Natural killer cell (primary cell): ENCODE measurements at regions of chr11 and their contacts with region 1.

Region 1: GRCh38 chr11:122505304-122506006 is 150.1 kb upstream of the UBASH3B start:
- DNase-seq: peak; percentile 17 to 58
- ATAC-seq: peak in 2 of 3 donors; percentile 56 to 74
- H3K4me3 ChIP-seq: no peak overlapping the region
- H3K4me3 Mint-ChIP-seq: no peak overlapping the region
- H3K27ac ChIP-seq: no peak overlapping the region
- H3K27ac Mint-ChIP-seq: no peak overlapping the region
- H3K4me1 ChIP-seq: no peaks in the 10 kb centered on the region
- H3K4me1 Mint-ChIP-seq: no peaks in the 10 kb centered on the region
- H3K27me3 ChIP-seq: no peaks in the 10 kb centered on the region
- H3K27me3 Mint-ChIP-seq: peaks cover 17 to 22% of the 10 kb centered on the region in 2 donors
- CTCF ChIP-seq: peak; percentile 47

Region 2: DNA sequence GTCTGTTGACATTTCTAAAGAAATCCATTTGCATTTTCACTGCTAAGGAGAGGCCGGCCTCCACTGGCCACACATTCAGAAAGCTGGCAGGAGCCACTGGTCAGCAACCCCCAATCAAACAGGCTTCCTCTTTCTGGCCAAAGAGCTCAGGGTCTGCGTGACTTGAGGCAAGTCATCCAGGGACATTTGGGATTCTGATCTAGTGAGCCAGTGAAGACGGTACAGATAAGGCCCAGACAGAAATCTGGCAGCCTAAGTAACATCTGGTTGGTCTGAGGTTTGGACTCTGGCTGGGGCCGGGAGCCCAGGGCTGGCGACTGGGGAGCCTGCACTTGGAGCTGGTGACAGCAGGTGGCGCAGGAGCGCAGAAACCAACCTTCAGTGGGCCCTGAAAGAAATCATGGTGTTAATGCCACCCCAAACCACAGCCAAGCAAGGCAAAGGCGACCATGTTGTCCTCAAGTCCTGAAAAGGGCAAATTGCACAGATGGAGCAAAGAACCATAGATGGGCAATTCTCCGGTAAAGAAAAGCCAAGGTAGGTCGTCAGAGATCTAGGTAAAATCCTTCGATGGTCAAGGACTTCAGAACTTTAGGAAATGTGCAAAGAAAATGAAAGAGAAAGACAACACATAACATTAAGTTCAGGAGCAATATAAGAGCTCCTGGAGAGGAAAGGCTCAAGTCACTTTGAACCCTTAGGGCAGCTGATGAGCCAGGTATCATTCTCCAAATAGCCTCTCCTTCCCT is 290.0 kb before region 1 on chr11:
- intact Hi-C with region 1: loop called (anchors 5 kb)
- DNase-seq: peak in 1 of 2 donors; percentile 15
- ATAC-seq: peak in 2 of 3 donors; percentile 51 to 66
- H3K4me3 ChIP-seq: no peak overlapping the region
- H3K4me3 Mint-ChIP-seq: no peak overlapping the region
- H3K27ac ChIP-seq: no peak overlapping the region
- H3K27ac Mint-ChIP-seq: no peak overlapping the region
- H3K4me1 ChIP-seq: no peaks in the 10 kb centered on the region
- H3K4me1 Mint-ChIP-seq: no peaks in the 10 kb centered on the region
- H3K27me3 ChIP-seq: no peaks in the 10 kb centered on the region
- H3K27me3 Mint-ChIP-seq: peaks cover 5 to 12% of the 10 kb centered on the region in 2 donors
- CTCF ChIP-seq: peak; percentile 55